CD8-positive, alpha-beta T cell (primary cell): ENCODE measurements at regions of chr6 and their contacts with region 1.

Region 1: GRCh38 chr6:144359783-144360182 is 74.6 kb downstream of the UTRN start:
- DNase-seq: no peak
- ATAC-seq: no peak
- H3K4me3 ChIP-seq: no peak overlapping the region
- H3K4me3 Mint-ChIP-seq: no peak overlapping the region
- H3K27ac ChIP-seq: no peak overlapping the region
- H3K27ac Mint-ChIP-seq: peak overlapping the region; percentile 72
- H3K4me1 ChIP-seq: peaks cover 41% of the 10 kb centered on the region
- H3K4me1 Mint-ChIP-seq: peaks cover 82% of the 10 kb centered on the region
- H3K27me3 ChIP-seq: no peaks in the 10 kb centered on the region
- H3K27me3 Mint-ChIP-seq: no peaks in the 10 kb centered on the region
- CTCF ChIP-seq: no peak

Region 2: GRCh38 chr6:144075187-144075586 is 284.6 kb before region 1 on chr6:
- CTCF ChIA-PET with region 1: no interaction called
- POLR2A ChIA-PET with region 1: no interaction called
- intact Hi-C with region 1: no loop called
- DNase-seq: no peak
- ATAC-seq: no peak
- H3K4me3 ChIP-seq: no peak overlapping the region
- H3K4me3 Mint-ChIP-seq: no peak overlapping the region
- H3K27ac ChIP-seq: no peak overlapping the region
- H3K27ac Mint-ChIP-seq: no peak overlapping the region
- H3K4me1 ChIP-seq: no peaks in the 10 kb centered on the region
- H3K4me1 Mint-ChIP-seq: no peaks in the 10 kb centered on the region
- H3K27me3 ChIP-seq: no peaks in the 10 kb centered on the region
- H3K27me3 Mint-ChIP-seq: no peaks in the 10 kb centered on the region
- CTCF ChIP-seq: no peak

Region 3: GRCh38 chr6:144315981-144316861 is 43.6 kb before region 1 on chr6:
- CTCF ChIA-PET with region 1: interaction called, 5 read pairs
- POLR2A ChIA-PET with region 1: no interaction called
- intact Hi-C with region 1: loop called in 1 of 2 experiments (anchors 5 kb)
- DNase-seq: no peak
- ATAC-seq: no peak
- H3K4me3 ChIP-seq: no peak overlapping the region
- H3K4me3 Mint-ChIP-seq: no peak overlapping the region
- H3K27ac ChIP-seq: no peak overlapping the region
- H3K27ac Mint-ChIP-seq: peak overlapping the region; percentile 19
- H3K4me1 ChIP-seq: no peaks in the 10 kb centered on the region
- H3K4me1 Mint-ChIP-seq: peaks cover 3% of the 10 kb centered on the region
- H3K27me3 ChIP-seq: no peaks in the 10 kb centered on the region
- H3K27me3 Mint-ChIP-seq: no peaks in the 10 kb centered on the region
- CTCF ChIP-seq: no peak

Region 4: GRCh38 chr6:144400321-144400720 is 40.5 kb after region 1 on chr6:
- CTCF ChIA-PET with region 1: no interaction called
- POLR2A ChIA-PET with region 1: no interaction called
- intact Hi-C with region 1: loop called in 1 of 2 experiments (anchors 5 kb)
- DNase-seq: no peak
- ATAC-seq: no peak
- H3K4me3 ChIP-seq: no peak overlapping the region
- H3K4me3 Mint-ChIP-seq: no peak overlapping the region
- H3K27ac ChIP-seq: no peak overlapping the region
- H3K27ac Mint-ChIP-seq: peak overlapping the region; percentile 37
- H3K4me1 ChIP-seq: no peaks in the 10 kb centered on the region
- H3K4me1 Mint-ChIP-seq: peaks cover 52% of the 10 kb centered on the region
- H3K27me3 ChIP-seq: no peaks in the 10 kb centered on the region
- H3K27me3 Mint-ChIP-seq: no peaks in the 10 kb centered on the region
- CTCF ChIP-seq: no peak